ENCODE measurements at regions of chr12 and their contacts with region 1.

Region 1: DNA sequence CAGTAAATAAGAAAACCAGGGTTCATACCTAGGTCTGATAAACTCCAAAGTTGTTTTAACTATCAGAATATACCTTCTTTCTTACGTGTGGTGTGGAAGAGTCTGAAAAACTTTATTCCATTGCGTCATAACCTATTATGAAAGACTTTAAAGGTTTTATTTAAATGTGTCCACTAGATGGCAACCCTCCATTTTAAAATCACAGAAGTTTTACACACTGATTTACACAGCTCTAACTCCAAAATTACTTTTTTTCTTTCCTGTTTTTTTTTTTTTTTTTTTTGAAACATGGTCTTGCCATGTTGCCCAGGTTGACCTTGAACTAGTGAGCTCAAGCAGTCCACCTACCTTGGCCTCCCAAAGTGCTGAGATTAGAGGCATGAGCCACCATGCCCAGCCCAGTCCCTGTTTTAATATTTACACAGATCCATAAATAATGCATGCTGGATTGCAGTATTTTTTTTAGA is 17.3 kb upstream of the TMPRSS12 start:
- DNase-seq: no peak
- ATAC-seq: peak; percentile 72 to 82 (median 78)
- H3K4me3 ChIP-seq: no peak overlapping the region
- H3K27ac ChIP-seq: peak overlapping the region; percentile 75
- H3K4me1 ChIP-seq: peaks cover 13% of the 10 kb centered on the region
- H3K27me3 ChIP-seq: no peaks in the 10 kb centered on the region
- CTCF ChIP-seq: peak; percentile 60

Region 2: DNA sequence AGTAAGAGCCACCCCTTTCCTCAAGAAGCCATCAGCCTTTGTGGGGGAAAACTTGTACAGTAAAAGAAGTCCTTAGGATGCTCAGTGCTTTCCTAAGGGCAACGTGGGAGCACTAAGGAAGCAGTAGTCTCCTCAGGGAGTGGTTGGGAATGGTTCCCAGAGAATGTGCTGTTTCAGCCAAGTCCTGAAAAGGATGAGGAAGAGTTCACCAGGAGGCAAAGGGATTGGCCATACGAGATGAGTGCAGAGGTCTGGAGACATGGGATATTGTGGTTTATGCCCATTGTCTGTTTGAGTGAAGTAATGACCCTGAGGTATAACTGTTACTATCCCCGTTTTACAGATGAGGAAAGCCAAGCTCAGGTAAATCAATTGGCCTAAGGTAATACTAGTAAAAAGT is 147.5 kb before region 1 on chr12:
- intact Hi-C with region 1: no loop called
- DNase-seq: no peak
- ATAC-seq: no peak
- H3K4me3 ChIP-seq: no peak overlapping the region
- H3K27ac ChIP-seq: no peak overlapping the region
- H3K4me1 ChIP-seq: no peaks in the 10 kb centered on the region
- H3K27me3 ChIP-seq: no peaks in the 10 kb centered on the region
- CTCF ChIP-seq: no peak

Region 3: GRCh38 chr12:50986966-50987737 is 161.7 kb after region 1 on chr12:
- intact Hi-C with region 1: loop called (anchors 1 to 5 kb)
- DNase-seq: no peak
- ATAC-seq: peak; percentile 42 to 73 (median 65)
- H3K4me3 ChIP-seq: no peak overlapping the region
- H3K27ac ChIP-seq: peak overlapping the region; percentile 82
- H3K4me1 ChIP-seq: peaks cover 25% of the 10 kb centered on the region
- H3K27me3 ChIP-seq: no peaks in the 10 kb centered on the region
- CTCF ChIP-seq: peak; percentile 65